Left cardiac atrium (tissue), 4 donors: ENCODE measurements at regions of chr1 and their contacts with region 1.

Region 1: GRCh38 chr1:31182352-31182751 is 57.3 kb downstream of the NKAIN1 start:
- DNase-seq: peak; percentile 81
- ATAC-seq: peak; percentile 92 to 96

Region 2: GRCh38 chr1:31335007-31335406 is 152.7 kb after region 1 on chr1:
- intact Hi-C with region 1: loop called (anchors 5 to 10 kb)
- DNase-seq: no peak
- ATAC-seq: peak; percentile 19 to 38

Region 3: DNA sequence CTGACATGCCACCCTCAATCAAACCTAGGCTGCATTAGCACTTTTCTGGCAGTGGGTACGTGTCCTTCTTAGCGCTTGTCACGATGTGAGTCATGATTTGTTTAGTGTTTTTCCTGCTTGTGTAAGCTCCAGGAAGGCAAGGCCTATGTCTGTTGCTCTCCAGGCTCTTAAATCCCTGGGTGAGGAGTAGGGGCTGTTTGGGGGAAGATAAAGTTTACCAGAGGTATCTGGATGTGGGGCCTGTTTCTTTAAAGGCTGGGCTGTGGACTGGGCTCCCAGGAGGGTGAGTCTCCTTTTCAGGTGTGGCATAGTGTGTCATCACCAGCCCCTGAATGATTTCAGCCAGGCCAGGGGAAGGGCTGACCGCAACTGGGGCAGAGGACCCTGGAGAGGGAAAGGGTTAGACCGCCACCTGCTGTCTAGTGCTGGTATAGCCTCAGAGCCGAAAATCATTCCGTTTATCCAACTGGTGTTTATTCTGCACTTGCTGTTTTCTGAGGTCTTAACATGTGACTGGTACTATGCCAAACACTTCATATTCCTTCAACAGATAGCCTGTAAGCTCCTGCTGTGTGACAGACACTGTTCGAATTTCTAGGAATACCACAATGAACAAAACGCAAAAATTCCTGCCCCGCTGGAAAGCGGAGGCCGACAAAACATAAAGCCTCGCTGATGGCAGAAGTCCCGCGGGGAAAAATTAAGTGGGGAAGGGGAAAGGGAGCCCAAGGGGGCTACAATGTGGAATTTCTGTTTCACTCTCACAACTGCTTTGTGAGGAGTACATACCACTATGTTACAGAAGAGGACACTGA is 240.4 kb after region 1 on chr1:
- intact Hi-C with region 1: loop called (anchors 2 kb)
- DNase-seq: peak; percentile 62
- ATAC-seq: peak; percentile 81 to 92